Calu3 (cell line): ENCODE measurements at regions of chr1 and their contacts with region 1.

Region 1: GRCh38 chr1:85406887-85407533 is 57.9 kb downstream of the DDAH1 start:
- DNase-seq: peak; percentile 30
- H3K4me3 Mint-ChIP-seq: peak overlapping the region; percentile 58
- H3K27ac Mint-ChIP-seq: peak overlapping the region; percentile 45
- H3K4me1 Mint-ChIP-seq: peaks cover 57% of the 10 kb centered on the region
- H3K27me3 Mint-ChIP-seq: no peaks in the 10 kb centered on the region
- CTCF ChIP-seq: no peak

Region 2: GRCh38 chr1:85427331-85427730 is 20.3 kb after region 1 on chr1:
- CTCF ChIA-PET with region 1: interaction called, 10 read pairs
- intact Hi-C with region 1: no loop called
- DNase-seq: no peak
- H3K4me3 Mint-ChIP-seq: no peak overlapping the region
- H3K27ac Mint-ChIP-seq: no peak overlapping the region
- H3K4me1 Mint-ChIP-seq: peaks cover 20% of the 10 kb centered on the region
- H3K27me3 Mint-ChIP-seq: no peaks in the 10 kb centered on the region
- CTCF ChIP-seq: no peak

Region 3: GRCh38 chr1:85464497-85465098 is 57.6 kb after region 1 on chr1:
- CTCF ChIA-PET with region 1: interaction called, 6 read pairs
- intact Hi-C with region 1: loop called (anchors 2 kb)
- DNase-seq: peak; percentile 86
- H3K4me3 Mint-ChIP-seq: peak overlapping the region; percentile 79
- H3K27ac Mint-ChIP-seq: peak overlapping the region; percentile 74
- H3K4me1 Mint-ChIP-seq: peaks cover 34% of the 10 kb centered on the region
- H3K27me3 Mint-ChIP-seq: no peaks in the 10 kb centered on the region
- CTCF ChIP-seq: no peak